Heart left ventricle (tissue), 16 donors: ENCODE measurements at regions of chr2 and their contacts with region 1.

Region 1: GRCh38 chr2:191165176-191165643 is 14.4 kb upstream of the STAT4 start:
- DNase-seq: no peak
- ATAC-seq: peak; percentile 65 to 85 (median 80)
- H3K4me3 ChIP-seq: no peak overlapping the region
- H3K27ac ChIP-seq: peak overlapping the region in 3 of 12 donors; percentile 8 to 55 (median 33)
- H3K4me1 ChIP-seq: peaks cover 0 to 32% (median 21%) of the 10 kb centered on the region in 12 donors
- H3K27me3 ChIP-seq: no peaks in the 10 kb centered on the region
- CTCF ChIP-seq: peak; percentile 48 to 77 (median 70)
- POLR2A ChIP-seq: no peak

Region 2: GRCh38 chr2:191218292-191218898 is 53.2 kb after region 1 on chr2:
- intact Hi-C with region 1: loop called in 5 of 10 experiments (anchors 2 to 5 kb)
- DNase-seq: peak in 4 of 5 donors; percentile 35 to 40 (median 40)
- ATAC-seq: peak in 3 of 4 donors; percentile 60 to 79 (median 66)
- H3K4me3 ChIP-seq: no peak overlapping the region
- H3K27ac ChIP-seq: peak overlapping the region in 2 of 12 donors; percentile 2 to 5
- H3K4me1 ChIP-seq: peaks cover 0 to 32% (median 7%) of the 10 kb centered on the region in 12 donors
- H3K27me3 ChIP-seq: no peaks in the 10 kb centered on the region
- CTCF ChIP-seq: peak; percentile 54 to 77 (median 61)
- POLR2A ChIP-seq: no peak

Region 3: DNA sequence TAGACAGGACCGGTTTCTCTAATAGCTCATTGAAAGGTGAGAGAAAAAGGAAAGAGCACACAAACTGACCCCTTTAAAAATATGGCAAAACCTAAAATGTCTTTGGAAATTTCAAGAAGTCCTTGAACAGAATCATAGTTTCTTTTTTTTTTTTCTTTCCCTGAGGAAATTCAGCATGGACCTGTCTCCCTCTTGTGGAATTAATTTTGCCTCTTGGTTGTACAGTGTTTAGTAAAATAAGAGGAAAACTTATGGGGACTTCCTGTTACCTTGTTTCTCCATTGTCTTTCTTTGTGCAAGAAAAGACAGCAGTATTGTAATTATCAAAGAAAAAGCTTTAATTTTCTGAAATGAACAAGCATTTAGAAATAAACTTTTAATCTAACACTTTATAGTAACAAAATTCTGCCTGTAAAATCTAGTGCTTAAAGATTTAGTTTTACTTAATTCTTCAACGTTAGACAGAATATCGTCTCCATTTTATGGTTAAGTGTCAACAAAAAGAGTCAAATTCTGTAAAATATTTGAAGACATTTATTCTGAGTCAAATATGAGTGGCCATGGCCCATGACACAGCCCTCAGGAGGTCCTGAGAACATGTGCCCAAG is 336.5 kb after region 1 on chr2:
- intact Hi-C with region 1: loop called (anchors 1 to 5 kb)
- DNase-seq: no peak
- ATAC-seq: peak in 3 of 4 donors; percentile 38 to 75 (median 68)
- H3K4me3 ChIP-seq: no peak overlapping the region
- H3K27ac ChIP-seq: peak overlapping the region in 7 of 12 donors; percentile 19 to 74 (median 47)
- H3K4me1 ChIP-seq: peaks cover 0 to 24% (median 13%) of the 10 kb centered on the region in 12 donors
- H3K27me3 ChIP-seq: no peaks in the 10 kb centered on the region
- CTCF ChIP-seq: peak; percentile 52 to 83 (median 68)
- POLR2A ChIP-seq: no peak

Region 4: GRCh38 chr2:191521608-191522208 is 356.5 kb after region 1 on chr2:
- intact Hi-C with region 1: loop called (anchors 1 to 5 kb)
- DNase-seq: no peak
- ATAC-seq: no peak
- H3K4me3 ChIP-seq: no peak overlapping the region
- H3K27ac ChIP-seq: no peak overlapping the region
- H3K4me1 ChIP-seq: no peaks in the 10 kb centered on the region
- H3K27me3 ChIP-seq: no peaks in the 10 kb centered on the region
- CTCF ChIP-seq: peak; percentile 72 to 93 (median 80)
- POLR2A ChIP-seq: no peak

Region 5: GRCh38 chr2:191691016-191691735 is 526.0 kb after region 1 on chr2:
- intact Hi-C with region 1: loop called in 2 of 10 experiments (anchors 5 to 10 kb)
- DNase-seq: peak in 2 of 5 donors; percentile 30 to 35
- ATAC-seq: peak; percentile 64 to 84 (median 74)
- H3K4me3 ChIP-seq: no peak overlapping the region
- H3K27ac ChIP-seq: no peak overlapping the region
- H3K4me1 ChIP-seq: peaks cover 0 to 23% (median 4%) of the 10 kb centered on the region in 12 donors
- H3K27me3 ChIP-seq: peaks cover 0 to 6% (median 0%) of the 10 kb centered on the region in 9 donors
- CTCF ChIP-seq: peak; percentile 50 to 86 (median 72)
- POLR2A ChIP-seq: no peak